Activated CD8-positive, alpha-beta T cell treated with anti-CD3 and anti-CD28 coated beads for 36 hours (primary cell): ENCODE measurements at regions of chr5 and their contacts with region 1.

Region 1: GRCh38 chr5:172770675-172771438 is at the start of gene DUSP1:
- DNase-seq: peak; percentile 99
- ATAC-seq: peak; percentile 72
- H3K4me3 Mint-ChIP-seq: peak within 1 kb of the TSS; percentile 90
- H3K27ac Mint-ChIP-seq: peak within 1 kb of the TSS; percentile 97
- H3K4me1 Mint-ChIP-seq: peaks cover 65% of the 10 kb centered on the region
- H3K27me3 Mint-ChIP-seq: no peaks in the 10 kb centered on the region
- CTCF ChIP-seq: peak; percentile 41
- total RNA-seq, gene DUSP1: 16.6 to 17.9 TPM

Region 2: DNA sequence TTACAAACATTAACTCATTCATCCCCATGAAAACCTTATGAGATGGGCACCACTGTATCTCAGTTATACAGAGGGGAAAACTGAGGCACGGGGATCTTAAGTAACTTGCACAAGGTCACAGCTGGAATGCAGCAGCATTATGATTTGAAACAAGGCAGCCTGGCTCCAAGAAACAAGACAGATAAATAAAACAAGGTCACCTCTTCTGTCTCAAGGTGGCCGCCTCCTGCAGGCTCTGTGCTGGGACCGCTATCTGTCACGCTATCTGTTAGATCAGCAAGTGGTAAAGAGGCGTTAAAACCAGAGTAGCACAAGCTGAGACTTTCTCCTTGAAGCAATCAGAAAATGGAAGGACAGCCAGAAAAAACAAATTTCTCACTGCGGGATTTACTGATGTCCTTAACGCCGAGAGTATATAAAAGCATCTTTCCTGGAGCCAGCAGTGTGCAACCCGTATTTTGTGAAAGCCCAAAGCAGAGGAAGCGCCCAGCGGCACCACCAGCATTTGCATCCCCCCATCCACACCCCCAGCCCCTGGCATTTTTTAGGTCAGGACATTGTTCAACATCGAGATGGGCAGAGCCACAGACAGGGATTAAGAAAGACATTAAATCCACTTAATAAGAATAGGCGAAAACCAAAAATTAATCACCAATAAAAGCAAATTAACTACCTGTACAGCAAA is 48.6 kb before region 1 on chr5:
- CTCF ChIA-PET with region 1: interaction called, 20 read pairs
- POLR2A ChIA-PET with region 1: interaction called, 5 read pairs
- intact Hi-C with region 1: loop called (anchors 5 kb)
- DNase-seq: peak; percentile 36
- ATAC-seq: peak; percentile 68
- H3K4me3 Mint-ChIP-seq: no peak overlapping the region
- H3K27ac Mint-ChIP-seq: no peak overlapping the region
- H3K4me1 Mint-ChIP-seq: peaks cover 12% of the 10 kb centered on the region
- H3K27me3 Mint-ChIP-seq: no peaks in the 10 kb centered on the region
- CTCF ChIP-seq: no peak

Region 3: DNA sequence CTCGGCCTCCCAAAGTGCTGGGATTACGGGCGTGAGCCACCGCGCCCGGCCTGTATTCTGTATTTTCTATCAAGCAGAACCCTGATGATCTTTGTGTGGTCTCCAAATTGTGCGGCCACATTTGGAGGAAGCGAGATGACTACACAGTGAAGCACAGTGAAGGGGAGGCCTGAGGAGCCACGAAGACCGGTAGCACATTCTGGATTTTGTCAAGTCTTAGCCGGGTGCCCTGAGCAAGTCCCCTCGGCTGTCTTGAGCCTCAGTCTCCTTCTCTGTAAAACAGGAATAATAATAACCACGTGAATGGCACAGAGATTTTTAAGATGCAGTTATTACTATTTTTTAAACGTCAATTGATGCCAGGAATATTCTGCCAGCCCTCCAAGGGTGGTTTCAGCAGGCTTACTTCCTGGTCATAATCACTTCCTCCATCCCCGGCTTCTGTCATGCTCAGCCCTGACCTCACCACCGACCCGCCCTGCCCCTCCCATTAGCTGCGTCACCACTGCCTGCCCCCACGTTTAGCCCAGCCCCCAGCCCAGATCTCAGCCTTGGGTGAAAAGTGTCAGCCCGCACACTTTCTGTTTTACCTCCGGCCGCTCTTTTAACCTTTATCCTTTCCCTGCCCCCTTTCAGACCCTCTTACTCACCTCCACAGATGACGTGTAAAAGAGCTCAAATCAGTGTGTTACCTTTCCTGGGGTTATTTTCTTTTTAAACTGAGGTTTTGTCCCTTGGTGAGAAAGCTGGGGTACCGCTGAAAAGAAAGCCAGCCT is 36.2 kb after region 1 on chr5:
- CTCF ChIA-PET with region 1: interaction called, 6 read pairs
- POLR2A ChIA-PET with region 1: interaction called, 10 read pairs
- intact Hi-C with region 1: loop called (anchors 5 kb)
- DNase-seq: peak; percentile 98
- ATAC-seq: peak; percentile 99
- H3K4me3 Mint-ChIP-seq: peak overlapping the region; percentile 46
- H3K27ac Mint-ChIP-seq: peak overlapping the region; percentile 95
- H3K4me1 Mint-ChIP-seq: peaks cover 16% of the 10 kb centered on the region
- H3K27me3 Mint-ChIP-seq: no peaks in the 10 kb centered on the region
- CTCF ChIP-seq: no peak

Region 4: DNA sequence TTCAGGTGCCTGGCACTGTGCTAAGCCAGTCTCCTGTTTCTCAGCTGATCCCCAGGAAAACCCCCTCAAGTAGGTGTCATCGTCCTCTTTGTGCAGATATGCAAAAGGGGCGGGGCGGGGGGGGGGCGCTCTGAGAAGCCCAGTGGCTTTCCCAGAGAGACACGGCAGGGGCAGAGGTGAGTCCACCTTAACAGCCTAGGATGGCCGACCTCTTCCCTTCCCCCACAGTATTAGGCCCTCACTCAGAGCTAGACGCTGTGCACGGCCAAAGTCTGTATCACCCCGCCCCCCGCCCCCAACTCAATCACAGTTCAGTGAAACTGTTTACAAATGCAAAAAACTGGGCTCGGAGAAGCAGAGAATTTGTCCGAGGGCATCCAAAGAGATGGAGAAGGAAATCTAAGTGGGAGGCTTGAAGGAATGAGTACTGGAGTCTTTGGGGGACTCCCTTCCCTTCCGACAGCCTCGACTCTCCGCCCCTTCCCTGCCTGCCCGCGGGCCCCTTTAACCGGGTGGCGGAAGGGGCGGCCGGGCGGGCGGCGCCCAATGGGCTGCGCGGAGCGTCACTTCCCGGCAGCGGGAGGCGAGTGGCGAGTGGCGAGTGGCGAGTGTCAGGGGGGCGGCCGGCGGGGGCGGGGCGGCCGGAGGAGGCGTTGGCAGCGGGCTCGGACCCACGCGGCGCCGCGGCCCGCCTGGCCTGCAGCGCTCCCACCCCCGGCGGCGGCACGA is 63.0 kb after region 1 on chr5 and contains the start of gene ERGIC1:
- CTCF ChIA-PET with region 1: interaction called, 10 read pairs
- POLR2A ChIA-PET with region 1: interaction called, 22 read pairs
- intact Hi-C with region 1: loop called (anchors 5 kb)
- DNase-seq: peak; percentile 79
- ATAC-seq: peak; percentile 83
- H3K4me3 Mint-ChIP-seq: peak within 1 kb of the TSS; percentile 79
- H3K27ac Mint-ChIP-seq: peak within 1 kb of the TSS; percentile 80
- H3K4me1 Mint-ChIP-seq: peaks cover 40% of the 10 kb centered on the region
- H3K27me3 Mint-ChIP-seq: no peaks in the 10 kb centered on the region
- CTCF ChIP-seq: no peak
- total RNA-seq, gene ERGIC1: 56.1 to 57.0 TPM